Adrenal gland (tissue), 19 donors: ENCODE measurements at regions of chr9 and their contacts with region 1.

Region 1: DNA sequence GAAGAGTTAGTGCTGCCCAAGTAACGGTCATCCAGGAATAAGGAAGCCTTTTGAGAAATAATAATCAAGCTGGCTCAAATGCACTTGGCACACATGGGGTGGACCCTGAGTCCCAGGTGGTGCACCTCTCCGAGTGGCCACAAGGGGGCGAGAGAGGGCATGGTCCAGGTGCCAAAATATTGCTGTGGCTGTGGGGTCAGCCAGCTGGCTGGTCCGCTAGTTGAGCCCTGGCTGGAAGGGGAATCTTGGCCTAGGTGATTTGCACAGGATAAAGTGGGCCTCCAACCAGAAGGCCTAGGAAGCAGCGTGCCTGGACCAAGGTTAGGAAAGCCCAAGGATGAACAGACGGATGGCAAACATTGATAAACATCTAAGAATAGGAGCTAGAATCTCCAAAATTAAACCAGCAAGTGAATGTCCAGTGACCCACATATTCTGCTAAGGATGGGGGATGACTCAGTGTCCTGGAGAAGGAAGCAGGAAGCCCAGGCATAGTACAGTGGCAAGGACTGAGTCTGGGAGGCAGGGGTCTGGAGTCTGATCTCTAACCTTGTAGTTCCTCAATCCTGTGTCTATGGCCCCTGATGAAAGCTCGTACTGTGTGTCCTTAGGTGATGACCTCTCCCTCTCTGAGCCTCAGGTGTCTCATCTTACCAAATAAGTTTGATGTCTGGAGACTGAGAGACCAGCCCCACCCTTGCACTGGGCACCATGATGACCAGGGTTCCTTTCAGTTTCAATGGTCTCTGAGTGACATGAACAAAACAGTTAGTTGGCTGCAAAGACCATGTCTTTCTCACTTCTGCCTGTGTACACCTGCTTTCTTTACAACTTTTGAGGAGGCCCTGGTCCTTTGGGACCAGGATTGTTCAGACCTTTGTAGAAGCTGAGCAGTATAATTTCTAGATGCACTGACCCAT is 19.2 kb upstream of the SHB start:
- DNase-seq: peak; percentile 66 to 92 (median 75)
- H3K4me3 ChIP-seq: no peak overlapping the region
- H3K27ac ChIP-seq: no peak overlapping the region
- H3K4me1 ChIP-seq: no peaks in the 10 kb centered on the region
- H3K27me3 ChIP-seq: no peaks in the 10 kb centered on the region
- CTCF ChIP-seq: peak; percentile 84 to 99 (median 94)
- POLR2A ChIP-seq: no peak

Region 2: GRCh38 chr9:38130724-38131123 is 42.5 kb after region 1 on chr9:
- intact Hi-C with region 1: loop called in 1 of 2 experiments (anchors 10 kb)
- DNase-seq: peak; percentile 30 to 82 (median 56)
- H3K4me3 ChIP-seq: no peak overlapping the region
- H3K27ac ChIP-seq: no peak overlapping the region
- H3K4me1 ChIP-seq: no peaks in the 10 kb centered on the region
- H3K27me3 ChIP-seq: no peaks in the 10 kb centered on the region
- CTCF ChIP-seq: no peak
- POLR2A ChIP-seq: no peak

Region 3: GRCh38 chr9:38145526-38146053 is 57.3 kb after region 1 on chr9:
- intact Hi-C with region 1: no loop called
- DNase-seq: no peak
- H3K4me3 ChIP-seq: no peak overlapping the region
- H3K27ac ChIP-seq: no peak overlapping the region
- H3K4me1 ChIP-seq: peaks cover 0 to 4% of the 10 kb centered on the region in 2 donors
- H3K27me3 ChIP-seq: no peaks in the 10 kb centered on the region
- CTCF ChIP-seq: no peak
- POLR2A ChIP-seq: no peak

Region 4: DNA sequence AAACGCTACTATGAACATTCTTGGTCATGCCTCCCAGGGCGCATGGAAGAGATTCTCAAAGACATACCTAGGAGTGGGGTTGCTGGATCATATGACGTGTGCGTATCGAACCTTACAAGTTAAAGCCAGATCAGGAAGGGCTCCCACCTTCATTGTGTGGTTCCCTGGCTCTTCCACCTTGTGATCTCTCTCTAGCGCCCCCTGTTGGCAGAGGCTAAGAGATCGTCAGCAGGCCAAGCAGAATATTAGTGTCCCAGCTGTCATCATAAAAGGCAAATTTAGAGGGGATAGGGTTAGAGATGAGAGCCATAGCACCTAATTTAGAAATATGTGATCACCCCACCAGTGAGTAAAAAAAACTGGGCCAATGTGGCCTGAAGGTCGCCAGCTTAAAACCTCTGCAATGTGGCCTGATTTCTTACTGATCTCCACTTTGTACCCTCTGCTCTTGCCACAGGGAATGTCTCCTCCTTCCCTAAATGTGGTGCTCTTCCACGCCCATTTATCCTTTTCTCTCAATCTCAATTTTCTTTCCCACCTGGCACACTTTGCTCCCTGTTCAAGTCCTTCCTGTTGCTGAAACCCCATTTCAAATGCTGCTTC is 72.4 kb after region 1 on chr9:
- intact Hi-C with region 1: loop called in 1 of 2 experiments (anchors 5 kb)
- DNase-seq: peak; percentile 43 to 79 (median 76)
- H3K4me3 ChIP-seq: no peak overlapping the region
- H3K27ac ChIP-seq: no peak overlapping the region
- H3K4me1 ChIP-seq: no peaks in the 10 kb centered on the region
- H3K27me3 ChIP-seq: no peaks in the 10 kb centered on the region
- CTCF ChIP-seq: peak; percentile 57 to 80 (median 75)
- POLR2A ChIP-seq: no peak

Region 5: GRCh38 chr9:38362852-38363593 is 274.8 kb after region 1 on chr9:
- intact Hi-C with region 1: loop called in 1 of 2 experiments (anchors 5 kb)
- DNase-seq: peak; percentile 39 to 72 (median 66)
- H3K4me3 ChIP-seq: no peak overlapping the region
- H3K27ac ChIP-seq: peak overlapping the region in 1 of 5 donors; percentile 15
- H3K4me1 ChIP-seq: peaks cover 0 to 6% of the 10 kb centered on the region in 2 donors
- H3K27me3 ChIP-seq: no peaks in the 10 kb centered on the region
- CTCF ChIP-seq: peak; percentile 53 to 92 (median 72)
- POLR2A ChIP-seq: no peak